ENCODE measurements at regions of chr4 and their contacts with region 1.

Region 1: GRCh38 chr4:102760645-102761295 is at the start of gene MANBA:
- DNase-seq: peak; percentile 77
- H3K4me3 Mint-ChIP-seq: peak within 1 kb of the TSS; percentile 96
- H3K27ac Mint-ChIP-seq: peak within 1 kb of the TSS; percentile 90
- H3K4me1 Mint-ChIP-seq: peaks cover 31% of the 10 kb centered on the region
- H3K27me3 Mint-ChIP-seq: peaks cover 13% of the 10 kb centered on the region
- total RNA-seq, gene MANBA: 7.5 and 8.0 TPM in 2 replicates

Region 2: DNA sequence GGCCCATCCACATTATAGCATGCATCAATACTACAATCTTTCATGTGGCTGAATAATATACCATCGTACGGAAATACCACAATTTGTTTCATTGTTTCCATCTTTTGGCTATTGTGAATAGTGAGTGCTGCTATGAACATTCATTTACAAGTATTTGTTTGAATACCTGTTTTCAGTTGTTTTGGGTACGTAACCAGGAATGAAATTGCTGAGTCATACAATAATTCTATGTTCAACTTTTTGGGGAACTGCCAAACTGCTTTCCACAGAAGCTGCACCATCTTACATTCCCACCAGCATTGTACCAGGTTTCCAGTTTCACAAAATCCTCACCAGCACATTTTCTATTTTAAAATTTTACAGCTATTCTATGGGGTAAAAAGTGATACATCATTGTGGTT is 28.5 kb after region 1 on chr4:
- intact Hi-C with region 1: loop called (anchors 1 kb)
- DNase-seq: no peak
- H3K4me3 Mint-ChIP-seq: no peak overlapping the region
- H3K27ac Mint-ChIP-seq: peak overlapping the region; percentile 52
- H3K4me1 Mint-ChIP-seq: peaks cover 38% of the 10 kb centered on the region
- H3K27me3 Mint-ChIP-seq: no peaks in the 10 kb centered on the region

Region 3: DNA sequence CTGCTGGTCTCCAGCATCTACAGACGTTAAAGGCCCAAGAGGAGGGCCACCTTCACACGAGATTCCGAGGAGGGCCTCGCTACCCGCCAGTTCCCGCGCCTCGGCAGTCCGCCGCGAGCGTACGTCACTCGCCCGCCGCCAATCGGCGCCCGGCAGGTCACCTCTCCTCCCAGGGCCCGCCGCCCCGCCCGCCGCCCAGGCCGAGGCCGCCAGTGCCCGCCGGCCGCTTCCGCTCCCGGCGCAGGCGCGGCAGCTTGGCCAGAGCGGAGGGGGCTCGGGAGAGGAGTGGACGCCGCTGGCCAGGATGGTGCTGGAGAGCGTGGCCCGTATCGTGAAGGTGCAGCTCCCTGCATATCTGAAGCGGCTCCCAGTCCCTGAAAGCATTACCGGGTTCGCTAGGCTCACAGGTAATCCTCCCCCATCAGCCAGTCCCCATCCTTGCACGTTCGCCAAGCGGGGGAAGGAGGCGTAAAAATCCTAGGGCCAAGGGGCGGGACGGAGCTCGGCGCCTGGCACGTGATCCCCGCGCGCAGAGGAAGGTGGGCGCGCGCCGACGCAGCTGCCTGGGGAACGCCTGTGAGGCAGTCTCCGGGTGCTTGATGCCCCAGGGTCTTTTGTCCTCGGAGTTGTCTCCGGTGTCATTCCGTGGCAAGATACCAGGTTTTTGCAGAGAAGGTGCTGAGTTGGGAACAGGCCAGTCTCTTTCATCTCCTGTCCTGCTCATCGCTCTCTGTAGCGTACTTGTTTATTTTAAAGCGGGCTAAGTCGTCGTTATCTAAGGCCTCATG is 108.2 kb after region 1 on chr4 and contains the start of gene CISD2:
- intact Hi-C with region 1: loop called (anchors 1 kb)
- DNase-seq: peak; percentile 91
- H3K4me3 Mint-ChIP-seq: peak within 1 kb of the TSS; percentile 93
- H3K27ac Mint-ChIP-seq: peak within 1 kb of the TSS; percentile 99
- H3K4me1 Mint-ChIP-seq: peaks cover 69% of the 10 kb centered on the region
- H3K27me3 Mint-ChIP-seq: no peaks in the 10 kb centered on the region
- total RNA-seq, gene CISD2: 41.2 and 50.7 TPM in 2 replicates

Region 4: DNA sequence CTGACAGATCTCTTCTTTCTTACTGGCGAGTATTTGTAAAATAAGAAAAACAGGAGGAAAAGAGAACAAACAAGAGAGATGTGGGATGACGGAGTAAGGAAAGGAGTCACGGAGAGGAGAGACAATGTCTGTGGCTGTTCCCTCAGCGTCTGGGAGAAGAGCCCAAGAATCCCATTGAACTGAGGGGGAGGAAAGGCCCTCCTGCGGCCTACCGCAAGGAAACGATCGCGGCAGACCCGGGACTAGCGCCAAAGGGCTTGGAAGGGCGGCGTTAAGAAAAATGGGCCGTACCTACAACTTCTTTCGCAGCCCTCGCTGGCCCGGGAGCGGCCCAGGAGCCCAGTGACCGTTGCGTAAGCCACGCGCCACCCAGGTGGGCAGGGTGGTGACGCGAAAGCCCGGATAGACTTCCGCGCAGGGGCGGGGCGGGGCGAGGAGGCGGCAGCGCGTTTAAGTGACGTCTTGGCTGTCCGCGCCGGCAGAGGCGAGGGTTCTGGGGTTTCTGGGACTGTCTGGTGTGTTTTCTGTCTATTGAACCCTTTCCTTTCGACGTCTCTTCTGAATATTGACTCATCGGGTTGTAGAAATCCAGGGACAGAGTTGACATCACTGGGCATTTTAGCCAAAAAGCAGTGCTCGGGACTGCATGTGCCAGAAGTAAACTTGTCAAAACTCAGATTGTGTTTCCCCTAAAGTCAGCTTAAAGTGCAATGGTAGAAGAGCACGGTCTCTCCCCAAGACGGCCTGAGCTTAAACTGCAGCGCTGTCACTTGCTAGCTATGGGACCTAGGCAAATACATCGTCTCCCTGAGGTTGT is 258.7 kb after region 1 on chr4 and contains the start of gene SLC9B1:
- intact Hi-C with region 1: loop called (anchors 1 kb)
- DNase-seq: peak; percentile 93
- H3K4me3 Mint-ChIP-seq: peak within 1 kb of the TSS; percentile 90
- H3K27ac Mint-ChIP-seq: peak within 1 kb of the TSS; percentile 96
- H3K4me1 Mint-ChIP-seq: peaks cover 25% of the 10 kb centered on the region
- H3K27me3 Mint-ChIP-seq: no peaks in the 10 kb centered on the region
- total RNA-seq, gene SLC9B1: 0.51 and 0.52 TPM in 2 replicates

Region 5: DNA sequence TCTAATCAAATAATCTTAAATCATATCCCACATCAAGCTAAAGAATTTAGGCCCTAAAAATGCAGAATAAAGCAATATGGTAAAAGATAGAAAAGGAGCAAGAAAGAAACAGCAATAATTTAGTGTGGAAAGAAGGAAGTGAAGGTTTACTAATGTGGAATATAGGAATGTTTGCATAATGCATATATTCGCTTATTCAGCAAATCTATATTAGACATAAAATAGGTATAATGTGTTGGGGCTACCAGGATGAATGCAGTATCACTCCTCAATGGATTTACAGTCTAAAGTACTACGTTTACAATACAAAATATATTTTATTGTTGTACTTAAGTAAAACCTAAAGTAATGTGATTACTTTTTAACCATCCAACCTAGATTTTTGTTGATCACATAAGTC is 432.7 kb after region 1 on chr4:
- intact Hi-C with region 1: no loop called
- DNase-seq: no peak
- H3K4me3 Mint-ChIP-seq: no peak overlapping the region
- H3K27ac Mint-ChIP-seq: no peak overlapping the region
- H3K4me1 Mint-ChIP-seq: peaks cover 28% of the 10 kb centered on the region
- H3K27me3 Mint-ChIP-seq: no peaks in the 10 kb centered on the region

Region 6: DNA sequence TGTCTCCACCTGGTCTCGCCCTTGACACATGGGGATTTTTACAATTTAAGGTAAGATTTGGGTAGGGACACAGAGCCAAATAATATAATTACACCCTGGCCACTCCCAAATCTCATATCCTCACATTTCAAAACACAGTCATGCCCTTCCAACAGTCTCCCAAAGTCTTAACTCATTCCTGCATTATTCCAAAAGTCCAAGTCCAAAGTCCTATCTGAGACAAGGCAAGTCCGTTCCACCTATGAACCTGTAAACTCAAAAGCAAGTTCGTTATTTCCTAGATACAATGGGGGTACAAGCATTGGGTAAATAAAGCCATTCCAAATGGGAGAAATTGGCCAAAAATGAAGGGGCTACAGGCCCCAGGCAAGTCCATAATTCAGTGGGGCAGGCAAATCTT is 1353.1 kb after region 1 on chr4:
- intact Hi-C with region 1: no loop called
- DNase-seq: no peak
- H3K4me3 Mint-ChIP-seq: no peak overlapping the region
- H3K27ac Mint-ChIP-seq: no peak overlapping the region
- H3K4me1 Mint-ChIP-seq: no peaks in the 10 kb centered on the region
- H3K27me3 Mint-ChIP-seq: no peaks in the 10 kb centered on the region

Measured in activated T-helper 1 cell treated with anti-CD3 and anti-CD28 coated beads, Interleukin-12 subunit alpha, Interleukin-12 subunit beta, Interleukin-2, Interleukin-4 antibody, amounts not matched to agents 30 ng/mL and 10 ng/mL and 1 ng/mL, durations not matched to agents 14 hours and 24 hours and 36 hours (primary cell).